ENCODE measurements at regions of chr7 and their contacts with region 1.

Region 1: GRCh38 chr7:28020302-28020940 is 160.2 kb downstream of the JAZF1 start:
- DNase-seq: peak in 4 of 5 donors; percentile 44 to 54 (median 50)
- H3K4me3 ChIP-seq: no peak overlapping the region
- H3K4me3 Mint-ChIP-seq: no peak overlapping the region
- H3K27ac ChIP-seq: no peak overlapping the region
- H3K27ac Mint-ChIP-seq: peak overlapping the region in 1 of 7 donors; percentile 12
- H3K4me1 ChIP-seq: peaks cover 9% of the 10 kb centered on the region
- H3K4me1 Mint-ChIP-seq: peaks cover 8 to 12% (median 8%) of the 10 kb centered on the region in 4 donors
- H3K27me3 ChIP-seq: no peaks in the 10 kb centered on the region
- H3K27me3 Mint-ChIP-seq: no peaks in the 10 kb centered on the region

Region 2: DNA sequence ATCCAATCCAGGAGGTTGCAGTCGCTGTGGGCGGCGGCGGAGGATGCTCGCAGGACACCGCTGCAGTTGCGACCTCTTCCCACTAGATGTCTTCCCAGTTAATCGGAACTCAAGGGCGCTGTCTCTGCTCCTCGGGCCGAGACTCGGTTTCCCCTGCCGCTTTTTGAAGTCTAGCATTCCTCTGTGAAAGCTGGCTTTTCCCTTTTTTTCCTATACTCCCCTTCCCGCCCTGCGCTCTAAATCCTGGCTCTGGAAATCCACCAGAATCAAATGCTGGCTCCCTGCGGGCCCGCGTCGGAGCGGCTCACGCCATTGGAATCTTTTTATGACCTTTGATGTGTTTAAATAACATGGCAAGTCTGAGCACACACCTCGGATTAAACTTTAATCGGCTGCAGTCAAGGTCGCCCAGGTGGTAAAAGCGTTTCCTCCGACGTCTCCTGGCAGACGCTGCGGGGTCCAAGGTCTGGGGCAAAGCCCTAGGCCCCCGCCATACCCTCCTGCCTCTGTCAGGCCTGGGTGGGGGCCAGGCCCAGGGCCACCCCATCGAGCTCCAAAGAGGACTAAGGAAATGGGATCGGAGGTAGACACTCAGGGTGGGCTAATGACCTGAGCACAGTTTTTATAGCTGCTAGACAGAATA is 809.9 kb before region 1 on chr7:
- CTCF ChIA-PET with region 1: interaction called, 4 read pairs
- POLR2A ChIA-PET with region 1: no interaction called
- intact Hi-C with region 1: loop called (anchors 1 kb)
- DNase-seq: peak in 1 of 5 donors; percentile 29
- H3K4me3 ChIP-seq: no peak overlapping the region
- H3K4me3 Mint-ChIP-seq: peak overlapping the region; percentile 9 to 72 (median 56)
- H3K27ac ChIP-seq: no peak overlapping the region
- H3K27ac Mint-ChIP-seq: peak overlapping the region in 1 of 7 donors; percentile 47
- H3K4me1 ChIP-seq: peaks cover 6% of the 10 kb centered on the region
- H3K4me1 Mint-ChIP-seq: peaks cover 6 to 20% (median 14%) of the 10 kb centered on the region in 4 donors
- H3K27me3 ChIP-seq: peaks cover 44% of the 10 kb centered on the region
- H3K27me3 Mint-ChIP-seq: peaks cover 66 to 83% of the 10 kb centered on the region in 2 donors

Region 3: DNA sequence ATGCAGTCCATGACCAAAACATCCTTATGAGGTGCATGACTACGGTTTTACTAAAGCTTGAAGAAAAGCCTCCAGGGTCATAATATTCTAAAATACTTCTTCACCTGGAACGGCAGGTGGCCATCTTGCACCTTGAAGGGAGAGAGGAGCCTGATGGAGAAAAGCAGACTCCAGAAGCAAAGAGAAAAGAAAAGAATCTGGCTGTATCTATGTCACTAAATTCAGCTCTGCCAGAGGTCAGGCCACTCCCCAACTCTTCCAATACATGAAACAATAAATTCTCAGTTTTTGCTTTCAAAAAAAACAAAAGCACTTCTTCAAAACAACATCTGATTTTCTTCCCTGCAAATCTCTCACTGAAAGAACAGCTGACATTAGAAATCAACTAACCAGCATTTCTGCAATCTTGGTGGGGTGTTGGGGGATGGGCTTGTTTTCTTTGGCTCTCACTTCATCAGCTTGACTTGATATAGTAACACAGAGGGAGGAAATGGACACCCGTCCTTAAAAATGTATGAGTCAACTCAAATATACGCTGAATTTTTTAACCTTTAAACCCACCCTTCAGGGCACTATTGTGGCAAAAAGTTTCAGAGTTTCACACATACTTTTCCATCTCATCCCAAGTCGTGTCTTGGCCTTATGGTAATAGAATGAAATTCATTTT is 379.4 kb before region 1 on chr7:
- CTCF ChIA-PET with region 1: no interaction called
- POLR2A ChIA-PET with region 1: no interaction called
- intact Hi-C with region 1: loop called (anchors 5 kb)
- DNase-seq: no peak
- H3K4me3 ChIP-seq: no peak overlapping the region
- H3K4me3 Mint-ChIP-seq: no peak overlapping the region
- H3K27ac ChIP-seq: no peak overlapping the region
- H3K27ac Mint-ChIP-seq: no peak overlapping the region
- H3K4me1 ChIP-seq: peaks cover 15% of the 10 kb centered on the region
- H3K4me1 Mint-ChIP-seq: peaks cover 16 to 31% (median 27%) of the 10 kb centered on the region in 4 donors
- H3K27me3 ChIP-seq: no peaks in the 10 kb centered on the region
- H3K27me3 Mint-ChIP-seq: no peaks in the 10 kb centered on the region

Region 4: GRCh38 chr7:27689591-27690164 is 330.7 kb before region 1 on chr7:
- CTCF ChIA-PET with region 1: interaction called, 5 read pairs
- POLR2A ChIA-PET with region 1: no interaction called
- intact Hi-C with region 1: loop called (anchors 2 kb)
- DNase-seq: peak in 3 of 5 donors; percentile 1 to 4 (median 2)
- H3K4me3 ChIP-seq: no peak overlapping the region
- H3K4me3 Mint-ChIP-seq: no peak overlapping the region
- H3K27ac ChIP-seq: no peak overlapping the region
- H3K27ac Mint-ChIP-seq: peak overlapping the region in 1 of 7 donors; percentile 13
- H3K4me1 ChIP-seq: no peaks in the 10 kb centered on the region
- H3K4me1 Mint-ChIP-seq: no peaks in the 10 kb centered on the region
- H3K27me3 ChIP-seq: no peaks in the 10 kb centered on the region
- H3K27me3 Mint-ChIP-seq: peaks cover 4 to 12% of the 10 kb centered on the region in 2 donors

Region 5: DNA sequence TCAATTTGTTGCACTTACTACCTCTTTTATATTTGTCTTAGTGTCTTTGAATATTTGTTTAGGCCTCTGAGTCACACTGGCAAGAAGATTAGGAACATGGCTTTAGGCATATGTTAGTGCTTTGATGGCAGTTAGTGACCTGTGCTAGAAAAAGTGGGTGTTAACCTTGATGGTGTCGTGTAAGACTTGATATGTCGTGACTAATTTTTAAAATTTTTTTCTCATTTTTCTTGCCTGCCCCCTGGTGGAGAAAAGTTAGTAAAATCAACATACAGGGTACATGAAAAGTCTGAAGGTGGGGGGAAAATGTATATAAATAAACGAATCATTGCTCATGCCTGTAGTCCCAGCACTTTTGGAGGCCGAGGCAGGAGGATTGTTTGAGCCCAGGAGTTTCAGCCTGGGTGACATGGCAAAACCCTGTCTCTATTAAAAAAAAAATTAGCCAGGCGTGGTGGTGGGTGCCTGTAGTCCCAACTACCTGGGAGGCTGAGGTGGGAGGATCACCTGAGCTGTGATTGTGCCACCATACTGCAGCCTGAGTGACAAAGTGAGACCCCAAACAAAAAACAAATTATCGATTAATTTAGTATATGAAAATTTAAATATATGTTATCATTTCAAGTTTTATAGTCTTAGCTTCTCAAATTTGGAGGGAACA is 235.9 kb before region 1 on chr7:
- CTCF ChIA-PET with region 1: interaction called, 9 read pairs
- POLR2A ChIA-PET with region 1: no interaction called
- intact Hi-C with region 1: loop called (anchors 5 kb)
- DNase-seq: peak; percentile 35 to 52 (median 45)
- H3K4me3 ChIP-seq: no peak overlapping the region
- H3K4me3 Mint-ChIP-seq: no peak overlapping the region
- H3K27ac ChIP-seq: no peak overlapping the region
- H3K27ac Mint-ChIP-seq: peak overlapping the region in 3 of 7 donors; percentile 47 to 77 (median 57)
- H3K4me1 ChIP-seq: no peaks in the 10 kb centered on the region
- H3K4me1 Mint-ChIP-seq: peaks cover 16 to 19% (median 16%) of the 10 kb centered on the region in 4 donors
- H3K27me3 ChIP-seq: no peaks in the 10 kb centered on the region
- H3K27me3 Mint-ChIP-seq: no peaks in the 10 kb centered on the region

Region 6: GRCh38 chr7:27810186-27810585 is 210.2 kb before region 1 on chr7:
- CTCF ChIA-PET with region 1: interaction called, 3 read pairs
- POLR2A ChIA-PET with region 1: no interaction called
- intact Hi-C with region 1: loop called (anchors 10 kb)
- DNase-seq: no peak
- H3K4me3 ChIP-seq: no peak overlapping the region
- H3K4me3 Mint-ChIP-seq: no peak overlapping the region
- H3K27ac ChIP-seq: no peak overlapping the region
- H3K27ac Mint-ChIP-seq: no peak overlapping the region
- H3K4me1 ChIP-seq: no peaks in the 10 kb centered on the region
- H3K4me1 Mint-ChIP-seq: peaks cover 5 to 28% (median 14%) of the 10 kb centered on the region in 4 donors
- H3K27me3 ChIP-seq: no peaks in the 10 kb centered on the region
- H3K27me3 Mint-ChIP-seq: no peaks in the 10 kb centered on the region